Tibial artery (tissue), 4 donors: ENCODE measurements at regions of chr12 and their contacts with region 1.

Region 1: DNA sequence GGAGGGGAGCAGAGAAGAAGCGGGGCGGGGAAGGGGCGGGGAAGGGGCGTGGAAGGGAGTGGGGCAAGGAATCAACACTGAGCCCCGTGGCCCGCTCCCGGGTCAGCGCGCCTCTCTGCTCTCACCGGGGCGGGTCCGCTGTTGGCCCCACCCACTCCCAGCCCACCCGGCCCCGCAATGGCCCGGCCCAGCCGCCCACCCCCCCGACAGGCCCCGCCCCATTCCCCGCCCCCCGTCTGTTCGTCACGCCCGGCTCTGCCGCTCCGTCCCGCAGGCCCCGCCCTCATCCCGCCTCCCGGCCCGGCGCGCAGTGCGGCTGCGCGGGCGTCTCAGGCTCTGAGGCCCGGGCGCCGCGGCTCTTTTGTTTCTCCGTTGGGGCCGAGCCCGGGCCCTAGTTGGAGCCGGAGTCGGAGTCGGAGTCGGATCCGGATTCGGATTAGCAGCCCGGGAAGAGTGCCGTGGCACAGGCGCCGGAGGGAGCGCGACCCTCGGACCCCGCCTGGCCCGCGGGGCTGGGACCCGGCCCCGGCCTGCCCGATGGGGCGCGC is at the start of gene ULK1:
- DNase-seq: peak; percentile 92 to 96
- H3K4me3 ChIP-seq: peak within 1 kb of the TSS; percentile 82 to 91
- H3K27ac ChIP-seq: peak within 1 kb of the TSS; percentile 95 to 98
- H3K4me1 ChIP-seq: peaks cover 0 to 33% (median 12%) of the 10 kb centered on the region in 4 donors
- H3K27me3 ChIP-seq: no peaks in the 10 kb centered on the region
- CTCF ChIP-seq: no peak

Region 2: DNA sequence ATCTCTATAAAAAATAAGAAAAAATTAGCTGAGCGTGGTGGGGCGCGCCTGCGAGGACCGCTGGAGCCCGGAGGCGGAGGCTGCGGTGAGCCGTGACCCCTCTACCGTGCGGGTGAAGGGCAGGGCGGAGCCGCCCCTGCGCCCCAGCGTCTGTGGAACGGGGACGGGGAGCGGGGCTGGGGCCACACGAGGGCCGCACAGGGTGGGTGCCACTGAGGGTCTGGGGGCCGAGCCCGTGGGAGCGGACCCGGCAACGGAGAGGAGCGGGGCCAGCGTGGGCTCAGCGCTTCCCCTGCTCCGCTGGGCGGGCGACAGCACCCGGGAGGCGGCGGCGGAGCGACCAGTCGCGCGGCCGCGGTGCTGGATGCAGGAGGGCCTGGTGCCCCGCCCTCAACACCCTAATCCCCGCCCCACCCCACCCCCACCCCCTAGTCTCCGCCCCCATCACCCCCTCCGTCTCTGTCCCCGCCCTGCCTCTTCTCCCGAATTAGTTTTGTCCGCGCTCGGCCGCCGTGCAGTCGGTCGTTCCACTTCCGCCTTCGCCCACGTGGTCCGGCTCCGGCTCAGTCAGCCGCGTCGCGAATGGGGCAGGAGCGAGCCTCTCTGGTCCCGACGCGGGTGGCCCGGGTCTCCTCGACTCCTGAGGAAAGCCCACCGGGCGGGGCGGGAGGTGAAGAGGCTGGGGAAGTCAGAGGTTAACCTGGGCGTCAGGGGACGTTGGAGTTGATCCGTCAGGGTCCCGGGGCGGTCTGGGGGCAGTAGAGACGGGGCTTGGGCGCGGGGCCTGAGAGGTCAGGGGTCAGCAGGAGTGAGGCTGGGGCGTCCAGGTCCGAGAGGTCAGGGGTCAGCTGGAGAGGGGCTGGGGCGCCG is 34.6 kb after region 1 on chr12 and contains the start of gene PUS1:
- intact Hi-C with region 1: loop called (anchors 2 kb)
- DNase-seq: peak; percentile 91 to 97
- H3K4me3 ChIP-seq: peak within 1 kb of the TSS; percentile 68 to 79
- H3K27ac ChIP-seq: peak within 1 kb of the TSS; percentile 75 to 93
- H3K4me1 ChIP-seq: peaks cover 0 to 37% (median 23%) of the 10 kb centered on the region in 4 donors
- H3K27me3 ChIP-seq: no peaks in the 10 kb centered on the region
- CTCF ChIP-seq: no peak

Region 3: GRCh38 chr12:131949431-131950181 is 55.2 kb after region 1 on chr12 and contains the start of gene EP400:
- intact Hi-C with region 1: loop called (anchors 5 kb)
- DNase-seq: peak; percentile 96 to 98
- H3K4me3 ChIP-seq: peak within 1 kb of the TSS; percentile 86 to 97
- H3K27ac ChIP-seq: peak within 1 kb of the TSS; percentile 80 to 86
- H3K4me1 ChIP-seq: peaks cover 0 to 42% (median 20%) of the 10 kb centered on the region in 4 donors
- H3K27me3 ChIP-seq: no peaks in the 10 kb centered on the region
- CTCF ChIP-seq: peak; percentile 38 to 55

Region 4: GRCh38 chr12:132489602-132490239 is 595.3 kb after region 1 on chr12 and contains the start of gene FBRSL1:
- intact Hi-C with region 1: loop called (anchors 5 kb)
- DNase-seq: peak; percentile 90 to 93
- H3K4me3 ChIP-seq: peak within 1 kb of the TSS; percentile 79 to 81
- H3K27ac ChIP-seq: peak within 1 kb of the TSS; percentile 59 to 71
- H3K4me1 ChIP-seq: peaks cover 0 to 53% (median 45%) of the 10 kb centered on the region in 4 donors
- H3K27me3 ChIP-seq: no peaks in the 10 kb centered on the region
- CTCF ChIP-seq: no peak